BJ (cell line): ENCODE measurements at regions of chr4 and their contacts with region 1.

Region 1: DNA sequence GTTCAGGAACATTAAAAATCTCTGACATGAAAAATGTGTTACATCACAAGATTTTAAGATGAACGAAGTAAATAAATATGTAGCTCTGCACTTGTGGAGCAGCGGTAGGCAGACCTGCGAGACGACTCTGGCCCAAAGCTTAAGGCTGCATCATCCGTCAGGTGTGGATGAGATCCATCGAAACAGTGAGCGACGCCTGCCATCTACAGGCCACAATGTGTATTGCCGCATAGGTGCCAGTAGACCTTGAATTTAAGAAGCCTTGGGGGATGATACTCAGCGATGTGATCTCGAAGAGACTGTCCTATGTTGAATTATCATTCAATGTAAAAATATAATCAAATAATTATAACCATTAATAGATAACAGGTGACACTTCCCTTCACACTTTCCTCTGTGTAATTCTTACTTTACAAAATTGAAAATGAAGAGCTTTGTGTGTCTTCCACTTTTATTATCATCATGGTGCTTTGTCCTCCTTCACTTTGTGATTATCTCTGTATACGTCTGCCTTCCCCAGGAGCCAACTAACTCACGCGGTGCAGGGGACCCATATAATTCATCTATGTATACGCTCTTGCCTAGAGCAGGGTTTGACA is 851.0 kb downstream of the RAB28 start:
- DNase-seq: no peak
- H3K4me3 ChIP-seq: no peak overlapping the region
- H3K27me3 ChIP-seq: no peaks in the 10 kb centered on the region
- CTCF ChIP-seq: peak; percentile 82

Region 2: GRCh38 chr4:12615822-12616221 is 17.3 kb before region 1 on chr4:
- CTCF ChIA-PET with region 1: interaction called, 12 read pairs
- POLR2A ChIA-PET with region 1: no interaction called
- DNase-seq: no peak
- H3K4me3 ChIP-seq: no peak overlapping the region
- H3K27me3 ChIP-seq: no peaks in the 10 kb centered on the region
- CTCF ChIP-seq: no peak

Region 3: GRCh38 chr4:12651876-12652275 is 18.7 kb after region 1 on chr4:
- CTCF ChIA-PET with region 1: no interaction called
- POLR2A ChIA-PET with region 1: no interaction called
- DNase-seq: no peak
- H3K4me3 ChIP-seq: no peak overlapping the region
- H3K27me3 ChIP-seq: no peaks in the 10 kb centered on the region
- CTCF ChIP-seq: no peak